ENCODE measurements at regions of chr4 and their contacts with region 1.

Region 1: GRCh38 chr4:77711469-77711868 is 105.8 kb downstream of the CXCL13 start:
- DNase-seq: no peak
- ATAC-seq: no peak
- H3K4me3 ChIP-seq: no peak overlapping the region
- H3K4me3 Mint-ChIP-seq: no peak overlapping the region
- H3K27ac ChIP-seq: no peak overlapping the region
- H3K27ac Mint-ChIP-seq: peak overlapping the region in 5 of 9 donors; percentile 1 to 59 (median 28)
- H3K4me1 ChIP-seq: no peaks in the 10 kb centered on the region
- H3K4me1 Mint-ChIP-seq: peaks cover 3 to 25% (median 10%) of the 10 kb centered on the region in 7 donors
- H3K27me3 ChIP-seq: no peaks in the 10 kb centered on the region
- H3K27me3 Mint-ChIP-seq: no peaks in the 10 kb centered on the region

Region 2: DNA sequence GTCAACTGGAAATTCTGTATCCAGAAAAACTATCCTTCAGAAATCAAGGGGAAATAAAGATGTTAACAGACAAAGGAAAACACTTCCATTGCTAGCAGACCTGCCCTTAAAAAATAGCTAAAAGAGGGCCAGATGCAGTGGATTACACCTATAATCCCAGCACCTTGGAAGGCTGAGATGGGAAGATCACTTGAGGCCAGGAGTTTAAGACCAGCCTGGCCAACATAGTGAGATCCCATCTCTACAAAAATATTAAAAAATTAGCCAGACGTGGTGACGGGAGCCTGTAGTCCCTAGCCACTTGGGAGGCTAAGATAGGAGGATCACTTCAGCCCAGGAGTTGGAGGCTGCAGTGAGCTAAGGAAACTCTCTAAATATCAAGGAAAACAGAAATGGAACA is 40.3 kb after region 1 on chr4:
- CTCF ChIA-PET with region 1: no interaction called
- POLR2A ChIA-PET with region 1: no interaction called
- intact Hi-C with region 1: loop called in 1 of 2 experiments (anchors 5 kb)
- DNase-seq: no peak
- ATAC-seq: no peak
- H3K4me3 ChIP-seq: no peak overlapping the region
- H3K4me3 Mint-ChIP-seq: peak overlapping the region in 2 of 10 donors; percentile 4 to 14
- H3K27ac ChIP-seq: no peak overlapping the region
- H3K27ac Mint-ChIP-seq: peak overlapping the region in 2 of 9 donors; percentile 46 to 77
- H3K4me1 ChIP-seq: peaks cover 0 to 6% of the 10 kb centered on the region in 2 donors
- H3K4me1 Mint-ChIP-seq: peaks cover 7 to 57% (median 40%) of the 10 kb centered on the region in 7 donors
- H3K27me3 ChIP-seq: no peaks in the 10 kb centered on the region
- H3K27me3 Mint-ChIP-seq: no peaks in the 10 kb centered on the region